ENCODE measurements at regions of chr16 and their contacts with region 1.

Region 1: GRCh38 chr16:49407873-49408550 is 34.4 kb downstream of the C16orf78 start:
- DNase-seq: peak; percentile 79
- CTCF ChIP-seq: peak; percentile 92

Region 2: DNA sequence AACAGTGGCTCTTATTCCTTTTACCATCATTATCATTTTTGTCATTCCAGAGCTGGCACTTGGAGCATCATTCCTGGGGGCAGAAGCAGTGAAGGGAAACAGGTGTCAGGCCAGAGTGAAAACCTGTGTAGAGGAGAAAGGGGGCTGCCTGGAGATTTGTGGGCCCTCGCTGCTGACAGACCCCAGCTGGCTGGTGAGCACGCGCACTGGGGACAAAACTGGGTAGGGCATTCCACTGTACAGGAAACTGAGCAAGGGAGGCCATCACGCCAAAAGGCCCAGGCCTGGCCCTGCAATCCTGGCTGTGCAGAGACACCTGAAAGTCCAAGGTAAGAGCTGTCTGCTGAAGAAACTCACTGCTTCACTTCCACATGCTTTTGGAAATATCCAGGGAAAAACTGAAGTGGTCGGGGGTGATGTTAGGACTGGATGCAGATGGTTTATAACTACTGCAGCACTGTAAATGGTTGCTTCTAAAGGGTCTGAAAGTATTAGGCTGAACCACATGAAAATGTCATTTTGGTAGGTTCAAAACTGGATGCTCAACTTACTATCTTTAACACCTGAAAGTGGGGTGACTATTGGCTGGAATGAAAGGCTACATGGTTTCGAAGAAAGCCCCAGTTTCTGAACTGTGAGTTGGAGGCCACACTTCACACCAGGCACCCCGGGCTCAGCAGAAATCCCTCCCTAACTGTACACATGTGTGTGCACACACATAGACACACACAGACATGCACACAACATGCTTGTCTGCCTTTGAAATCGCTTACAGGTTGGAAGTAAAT is 190.6 kb after region 1 on chr16:
- CTCF ChIA-PET with region 1: interaction called, 21 read pairs
- POLR2A ChIA-PET with region 1: no interaction called
- DNase-seq: peak; percentile 53
- CTCF ChIP-seq: no peak

Region 3: DNA sequence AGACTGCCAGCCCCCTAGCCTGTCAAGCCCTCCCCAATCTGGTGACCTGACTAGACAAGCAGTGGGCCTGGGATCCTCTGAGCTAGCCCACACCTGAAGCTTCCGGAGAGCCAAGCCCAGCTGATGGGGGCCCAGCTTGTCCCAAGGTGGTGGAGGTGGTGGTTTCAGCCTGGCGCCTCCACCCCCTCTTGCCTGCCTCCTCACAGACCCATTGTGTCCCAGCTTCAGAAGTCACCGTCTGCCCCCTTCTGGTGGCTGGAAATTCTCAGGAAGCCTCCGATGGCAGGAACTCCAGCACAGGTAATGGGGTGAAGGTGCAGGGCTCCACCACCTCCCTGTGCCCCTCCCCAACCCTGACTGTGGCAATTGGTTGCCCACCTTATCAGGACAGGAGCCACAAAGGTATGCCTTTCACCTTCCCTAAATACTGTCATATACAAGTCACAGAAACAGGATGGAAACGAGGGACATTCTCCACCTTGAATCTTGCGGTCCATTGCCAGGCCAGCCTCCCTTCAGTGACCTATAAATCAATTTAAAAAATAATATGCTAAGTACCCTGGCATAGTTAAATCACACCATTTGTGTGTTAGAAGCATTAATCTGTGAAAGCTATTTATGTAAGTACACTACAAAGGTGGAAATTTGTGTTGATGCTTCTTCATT is 513.9 kb after region 1 on chr16:
- CTCF ChIA-PET with region 1: interaction called, 10 read pairs
- POLR2A ChIA-PET with region 1: no interaction called
- DNase-seq: peak; percentile 66
- CTCF ChIP-seq: peak; percentile 68